Aorta (tissue), 5 donors: ENCODE measurements at regions of chr13 and their contacts with region 1.

Region 1: GRCh38 chr13:98484289-98485219 is 92.4 kb downstream of the STK24 start:
- DNase-seq: peak; percentile 88 to 89
- ATAC-seq: peak; percentile 80
- H3K4me3 ChIP-seq: no peak overlapping the region
- H3K27ac ChIP-seq: peak overlapping the region in 1 of 2 donors; percentile 23
- H3K4me1 ChIP-seq: peaks cover 0 to 3% of the 10 kb centered on the region in 2 donors
- H3K27me3 ChIP-seq: no peaks in the 10 kb centered on the region

Region 2: GRCh38 chr13:98454389-98454881 is 30.1 kb before region 1 on chr13:
- intact Hi-C with region 1: loop called in 1 of 2 experiments (anchors 2 kb)
- DNase-seq: no peak
- ATAC-seq: peak; percentile 30
- H3K4me3 ChIP-seq: no peak overlapping the region
- H3K27ac ChIP-seq: peak overlapping the region in 1 of 2 donors; percentile 56
- H3K4me1 ChIP-seq: peaks cover 0 to 5% of the 10 kb centered on the region in 2 donors
- H3K27me3 ChIP-seq: no peaks in the 10 kb centered on the region